ENCODE measurements at regions of chr3 and their contacts with region 1.

Region 1: DNA sequence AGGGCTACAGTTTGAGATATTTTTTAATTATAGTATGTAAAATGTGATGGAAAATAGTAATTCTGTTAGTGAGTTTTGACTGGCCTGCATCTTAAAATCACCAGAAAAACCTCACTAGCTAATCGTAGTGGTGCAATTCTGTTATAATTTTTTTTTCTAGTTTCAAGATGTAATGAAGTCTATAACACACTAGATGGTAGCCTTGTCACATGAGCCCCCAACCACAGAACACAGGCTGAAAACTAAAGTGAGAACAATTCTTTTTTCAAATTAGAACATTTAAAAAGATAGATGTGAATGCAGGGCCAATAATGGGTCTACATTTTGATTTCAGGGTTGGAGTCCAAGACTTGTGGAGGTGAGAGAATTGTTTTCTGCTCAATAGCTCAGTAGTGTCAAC is 83.3 kb upstream of the KCNH8 start:
- DNase-seq: no peak
- ATAC-seq: peak in 3 of 4 donors; percentile 53 to 67 (median 58)
- H3K4me3 ChIP-seq: no peak overlapping the region
- H3K27ac ChIP-seq: no peak overlapping the region
- H3K4me1 ChIP-seq: peaks cover 0 to 3% (median 0%) of the 10 kb centered on the region in 3 donors
- H3K27me3 ChIP-seq: no peaks in the 10 kb centered on the region
- CTCF ChIP-seq: peak in 2 of 4 donors; percentile 22 to 24

Region 2: GRCh38 chr3:18812316-18812715 is 252.7 kb before region 1 on chr3:
- intact Hi-C with region 1: no loop called
- DNase-seq: no peak
- ATAC-seq: no peak
- H3K4me3 ChIP-seq: no peak overlapping the region
- H3K27ac ChIP-seq: no peak overlapping the region
- H3K4me1 ChIP-seq: no peaks in the 10 kb centered on the region
- H3K27me3 ChIP-seq: no peaks in the 10 kb centered on the region
- CTCF ChIP-seq: no peak

Region 3: DNA sequence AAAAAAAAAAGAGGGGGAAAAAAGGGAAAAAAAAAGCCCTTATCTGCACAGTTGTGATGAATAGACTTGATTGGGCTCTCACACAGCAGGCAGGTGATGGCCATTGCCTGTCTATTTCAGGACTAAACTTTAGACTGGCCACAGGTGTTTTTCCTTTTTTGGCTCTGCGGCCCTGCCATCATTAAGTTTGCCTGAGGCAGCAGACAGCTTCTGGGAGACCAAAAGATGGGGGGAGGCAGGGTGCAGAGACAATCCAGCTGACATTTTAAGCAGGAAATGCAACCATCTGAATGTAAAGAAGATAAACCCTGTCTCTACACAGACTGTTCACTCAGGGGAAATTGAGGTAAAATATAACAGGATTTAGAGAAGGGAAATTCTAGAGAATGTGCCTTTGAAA is 211.8 kb before region 1 on chr3:
- intact Hi-C with region 1: no loop called
- DNase-seq: no peak
- ATAC-seq: no peak
- H3K4me3 ChIP-seq: no peak overlapping the region
- H3K27ac ChIP-seq: no peak overlapping the region
- H3K4me1 ChIP-seq: no peaks in the 10 kb centered on the region
- H3K27me3 ChIP-seq: no peaks in the 10 kb centered on the region
- CTCF ChIP-seq: no peak

Region 4: GRCh38 chr3:19866751-19867347 is 801.8 kb after region 1 on chr3:
- intact Hi-C with region 1: loop called in 1 of 3 experiments (anchors 10 kb)
- DNase-seq: peak in 3 of 6 donors; percentile 12 to 58 (median 20)
- ATAC-seq: peak; percentile 74 to 92 (median 90)
- H3K4me3 ChIP-seq: no peak overlapping the region
- H3K27ac ChIP-seq: no peak overlapping the region
- H3K4me1 ChIP-seq: no peaks in the 10 kb centered on the region
- H3K27me3 ChIP-seq: no peaks in the 10 kb centered on the region
- CTCF ChIP-seq: peak; percentile 35 to 79 (median 50)